ENCODE measurements at regions of chr4 and their contacts with region 1.

Region 1: GRCh38 chr4:28675582-28675981 is 1814.9 kb downstream of the STIM2 start:
- DNase-seq: no peak
- ATAC-seq: no peak
- H3K4me3 ChIP-seq: no peak overlapping the region
- H3K27ac ChIP-seq: no peak overlapping the region
- H3K4me1 ChIP-seq: no peaks in the 10 kb centered on the region
- H3K27me3 ChIP-seq: no peaks in the 10 kb centered on the region
- CTCF ChIP-seq: no peak

Region 2: DNA sequence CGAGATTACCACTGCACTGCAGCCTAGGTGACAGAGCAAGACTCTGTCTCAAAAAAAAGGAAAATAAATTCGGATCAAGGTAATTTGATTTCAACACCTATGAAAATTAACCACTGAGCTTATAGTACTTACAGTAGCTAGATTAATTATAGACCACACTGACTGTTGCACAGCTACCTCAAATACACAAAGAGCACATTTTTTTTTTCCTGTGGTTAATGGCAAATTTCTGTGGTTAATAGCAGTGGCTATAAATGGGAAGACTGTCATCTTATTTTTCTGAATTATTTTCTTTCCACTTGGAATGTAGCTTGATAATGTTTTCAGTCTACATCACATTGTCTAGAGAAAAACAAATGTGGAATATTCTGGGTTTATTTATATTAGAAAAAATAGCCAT is 382.9 kb after region 1 on chr4:
- intact Hi-C with region 1: no loop called
- DNase-seq: no peak
- ATAC-seq: no peak
- H3K4me3 ChIP-seq: no peak overlapping the region
- H3K27ac ChIP-seq: no peak overlapping the region
- H3K4me1 ChIP-seq: no peaks in the 10 kb centered on the region
- H3K27me3 ChIP-seq: no peaks in the 10 kb centered on the region
- CTCF ChIP-seq: no peak

Region 3: DNA sequence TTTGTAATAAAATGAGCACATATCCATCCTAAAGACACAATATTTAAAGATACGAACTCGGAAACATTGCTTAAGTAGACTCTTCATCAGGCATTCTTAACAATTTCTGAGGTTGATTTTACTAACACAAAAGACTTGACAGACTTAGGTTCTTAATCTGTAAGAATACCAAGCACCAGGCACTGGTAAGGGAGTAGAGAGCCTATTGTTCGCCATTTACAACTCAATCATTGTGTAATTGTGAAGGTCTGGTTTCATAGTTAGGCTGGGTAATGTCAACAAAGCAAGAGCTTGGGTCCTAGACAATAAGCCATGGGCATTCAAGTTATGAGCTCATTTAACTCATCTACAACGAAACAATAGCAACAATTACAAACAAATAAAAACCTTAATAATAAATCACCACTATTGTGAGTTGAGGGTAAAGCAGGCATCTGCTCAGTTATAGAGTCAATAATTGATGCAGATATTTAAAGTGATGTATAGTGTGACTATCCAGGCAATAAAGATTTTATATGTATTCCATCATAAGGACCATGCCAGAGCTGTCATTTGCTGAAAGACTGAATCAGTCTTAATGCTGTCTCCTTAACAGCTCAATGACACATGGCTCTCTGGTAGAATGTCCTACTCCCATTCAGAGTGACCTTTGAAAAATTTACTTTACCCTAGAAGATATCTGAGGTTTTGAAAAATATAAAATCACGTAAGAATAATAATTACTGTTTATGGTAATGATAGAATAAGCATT is 1380.6 kb after region 1 on chr4:
- intact Hi-C with region 1: loop called in 1 of 10 experiments (anchors 10 kb)
- DNase-seq: no peak
- ATAC-seq: no peak
- H3K4me3 ChIP-seq: no peak overlapping the region
- H3K27ac ChIP-seq: no peak overlapping the region
- H3K4me1 ChIP-seq: no peaks in the 10 kb centered on the region
- H3K27me3 ChIP-seq: no peaks in the 10 kb centered on the region
- CTCF ChIP-seq: no peak